CD14-positive monocyte (primary cell): ENCODE measurements at regions of chr2 and their contacts with region 1.

Region 1: GRCh38 chr2:239499726-239500573 is 99.1 kb upstream of the HDAC4 start:
- DNase-seq: peak; percentile 62 to 70 (median 66)
- H3K4me3 ChIP-seq: peak overlapping the region in 1 of 3 experiments; percentile 57
- H3K4me3 Mint-ChIP-seq: peak overlapping the region; percentile 66 to 81
- H3K27ac ChIP-seq: peak overlapping the region; percentile 97 to 100
- H3K27ac Mint-ChIP-seq: peak overlapping the region; percentile 97 to 100 (median 99)
- H3K4me1 ChIP-seq: peaks cover 59 to 66% of the 10 kb centered on the region in 2 donors
- H3K4me1 Mint-ChIP-seq: peaks cover 67% of the 10 kb centered on the region
- H3K27me3 ChIP-seq: no peaks in the 10 kb centered on the region
- H3K27me3 Mint-ChIP-seq: peaks cover 0 to 4% (median 2%) of the 10 kb centered on the region in 3 donors
- CTCF ChIP-seq: no peak

Region 2: DNA sequence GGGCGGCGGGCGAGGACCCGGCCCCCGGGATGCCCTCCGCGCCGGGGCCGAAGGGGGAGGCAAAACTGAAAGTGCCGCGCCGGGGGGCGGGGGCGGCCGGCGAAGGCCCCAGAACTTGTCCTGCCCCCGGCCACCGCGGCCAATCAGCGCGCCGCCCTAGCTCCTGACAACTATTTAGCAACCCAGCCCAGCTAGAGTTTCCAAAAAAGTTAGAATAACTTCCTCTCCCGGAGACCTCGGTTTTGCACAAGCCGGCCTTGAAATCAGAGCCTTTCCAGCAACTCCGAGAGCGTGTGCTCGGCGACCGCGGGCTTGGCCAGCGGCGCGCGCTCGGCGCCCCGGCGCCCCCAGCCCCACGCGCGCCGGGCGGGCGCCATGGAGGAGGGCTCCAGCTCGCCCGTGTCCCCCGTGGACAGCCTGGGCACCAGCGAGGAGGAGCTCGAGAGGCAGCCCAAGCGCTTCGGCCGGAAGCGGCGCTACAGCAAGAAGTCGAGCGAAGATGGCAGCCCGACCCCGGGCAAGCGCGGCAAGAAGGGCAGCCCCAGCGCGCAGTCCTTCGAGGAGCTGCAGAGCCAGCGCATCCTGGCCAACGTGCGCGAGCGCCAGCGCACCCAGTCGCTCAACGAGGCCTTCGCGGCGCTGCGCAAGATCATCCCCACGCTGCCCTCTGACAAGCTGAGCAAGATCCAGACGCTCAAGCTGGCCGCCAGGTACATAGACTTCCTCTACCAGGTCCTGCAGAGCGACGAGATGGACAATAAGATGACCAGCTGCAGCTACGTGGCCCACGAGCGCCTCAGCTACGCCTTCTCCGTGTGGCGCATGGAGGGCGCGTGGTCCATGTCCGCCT is 651.9 kb before region 1 on chr2 and contains the start of gene TWIST2:
- intact Hi-C with region 1: no loop called
- DNase-seq: peak in 2 of 3 donors; percentile 19 to 22
- H3K4me3 ChIP-seq: peak within 1 kb of the TSS; percentile 41 to 76 (median 41)
- H3K4me3 Mint-ChIP-seq: peak within 1 kb of the TSS; percentile 61 to 87
- H3K27ac ChIP-seq: no peak within 1 kb of the TSS
- H3K27ac Mint-ChIP-seq: no peak within 1 kb of the TSS
- H3K4me1 ChIP-seq: peaks cover 12 to 31% of the 10 kb centered on the region in 2 donors
- H3K4me1 Mint-ChIP-seq: peaks cover 11% of the 10 kb centered on the region
- H3K27me3 ChIP-seq: peaks cover 70 to 89% of the 10 kb centered on the region in 2 donors
- H3K27me3 Mint-ChIP-seq: peaks cover 74 to 91% (median 79%) of the 10 kb centered on the region in 3 donors
- CTCF ChIP-seq: no peak
- polyA plus RNA-seq, gene TWIST2: 0.43 to 0.49 (median 0.43) TPM

Region 3: GRCh38 chr2:239223310-239224198 is 276.4 kb before region 1 on chr2:
- intact Hi-C with region 1: loop called in 1 of 2 experiments (anchors 10 kb)
- DNase-seq: no peak
- H3K4me3 ChIP-seq: peak overlapping the region in 1 of 3 experiments; percentile 65
- H3K4me3 Mint-ChIP-seq: peak overlapping the region; percentile 74 to 82
- H3K27ac ChIP-seq: peak overlapping the region; percentile 92 to 100
- H3K27ac Mint-ChIP-seq: peak overlapping the region; percentile 97 to 100 (median 100)
- H3K4me1 ChIP-seq: peaks cover 90 to 91% of the 10 kb centered on the region in 2 donors
- H3K4me1 Mint-ChIP-seq: peaks cover 93% of the 10 kb centered on the region
- H3K27me3 ChIP-seq: no peaks in the 10 kb centered on the region
- H3K27me3 Mint-ChIP-seq: peaks cover 0 to 2% (median 0%) of the 10 kb centered on the region in 3 donors
- CTCF ChIP-seq: no peak

Region 4: GRCh38 chr2:239444626-239445625 is 55.0 kb before region 1 on chr2:
- intact Hi-C with region 1: no loop called
- DNase-seq: no peak
- H3K4me3 ChIP-seq: no peak overlapping the region
- H3K4me3 Mint-ChIP-seq: no peak overlapping the region
- H3K27ac ChIP-seq: no peak overlapping the region
- H3K27ac Mint-ChIP-seq: peak overlapping the region in 1 of 7 donors; percentile 1
- H3K4me1 ChIP-seq: peaks cover 32 to 39% of the 10 kb centered on the region in 2 donors
- H3K4me1 Mint-ChIP-seq: peaks cover 50% of the 10 kb centered on the region
- H3K27me3 ChIP-seq: peaks cover 2 to 12% of the 10 kb centered on the region in 2 donors
- H3K27me3 Mint-ChIP-seq: peaks cover 18 to 28% (median 27%) of the 10 kb centered on the region in 3 donors
- CTCF ChIP-seq: no peak

Region 5: GRCh38 chr2:239465017-239466001 is 34.6 kb before region 1 on chr2:
- intact Hi-C with region 1: loop called (anchors 2 to 5 kb)
- DNase-seq: peak; percentile 99
- H3K4me3 ChIP-seq: peak overlapping the region in 1 of 3 experiments; percentile 21
- H3K4me3 Mint-ChIP-seq: peak overlapping the region; percentile 41 to 77
- H3K27ac ChIP-seq: peak overlapping the region; percentile 87 to 97
- H3K27ac Mint-ChIP-seq: peak overlapping the region in 4 of 7 donors; percentile 97 to 99 (median 98)
- H3K4me1 ChIP-seq: peaks cover 38 to 39% of the 10 kb centered on the region in 2 donors
- H3K4me1 Mint-ChIP-seq: peaks cover 41% of the 10 kb centered on the region
- H3K27me3 ChIP-seq: no peaks in the 10 kb centered on the region
- H3K27me3 Mint-ChIP-seq: peaks cover 0 to 2% (median 2%) of the 10 kb centered on the region in 3 donors
- CTCF ChIP-seq: no peak

Region 6: DNA sequence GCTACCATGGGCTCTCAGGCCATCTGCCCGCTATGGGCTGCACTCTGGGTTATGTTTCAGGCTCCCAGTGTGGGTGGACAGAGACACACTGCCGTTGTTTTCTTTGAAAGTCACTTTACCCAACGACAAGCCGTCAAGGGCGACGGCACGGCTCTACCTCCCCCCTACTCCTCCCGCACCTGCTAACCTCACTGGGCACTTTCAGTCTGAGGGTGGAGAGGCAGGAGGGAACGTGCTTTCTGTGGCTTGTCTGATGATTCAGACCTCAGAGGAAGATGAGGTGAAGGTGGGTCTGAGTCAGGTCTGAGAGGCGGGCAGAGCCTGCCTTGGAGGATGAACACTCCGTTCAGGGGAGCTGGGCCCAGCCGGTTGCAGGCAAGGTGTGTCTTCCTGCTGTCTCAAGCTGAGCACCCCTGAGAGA is 48.5 kb after region 1 on chr2:
- intact Hi-C with region 1: no loop called
- DNase-seq: no peak
- H3K4me3 ChIP-seq: no peak overlapping the region
- H3K4me3 Mint-ChIP-seq: no peak overlapping the region
- H3K27ac ChIP-seq: no peak overlapping the region
- H3K27ac Mint-ChIP-seq: no peak overlapping the region
- H3K4me1 ChIP-seq: no peaks in the 10 kb centered on the region
- H3K4me1 Mint-ChIP-seq: peaks cover 2% of the 10 kb centered on the region
- H3K27me3 ChIP-seq: no peaks in the 10 kb centered on the region
- H3K27me3 Mint-ChIP-seq: peaks cover 13 to 33% (median 22%) of the 10 kb centered on the region in 3 donors
- CTCF ChIP-seq: no peak

Region 7: DNA sequence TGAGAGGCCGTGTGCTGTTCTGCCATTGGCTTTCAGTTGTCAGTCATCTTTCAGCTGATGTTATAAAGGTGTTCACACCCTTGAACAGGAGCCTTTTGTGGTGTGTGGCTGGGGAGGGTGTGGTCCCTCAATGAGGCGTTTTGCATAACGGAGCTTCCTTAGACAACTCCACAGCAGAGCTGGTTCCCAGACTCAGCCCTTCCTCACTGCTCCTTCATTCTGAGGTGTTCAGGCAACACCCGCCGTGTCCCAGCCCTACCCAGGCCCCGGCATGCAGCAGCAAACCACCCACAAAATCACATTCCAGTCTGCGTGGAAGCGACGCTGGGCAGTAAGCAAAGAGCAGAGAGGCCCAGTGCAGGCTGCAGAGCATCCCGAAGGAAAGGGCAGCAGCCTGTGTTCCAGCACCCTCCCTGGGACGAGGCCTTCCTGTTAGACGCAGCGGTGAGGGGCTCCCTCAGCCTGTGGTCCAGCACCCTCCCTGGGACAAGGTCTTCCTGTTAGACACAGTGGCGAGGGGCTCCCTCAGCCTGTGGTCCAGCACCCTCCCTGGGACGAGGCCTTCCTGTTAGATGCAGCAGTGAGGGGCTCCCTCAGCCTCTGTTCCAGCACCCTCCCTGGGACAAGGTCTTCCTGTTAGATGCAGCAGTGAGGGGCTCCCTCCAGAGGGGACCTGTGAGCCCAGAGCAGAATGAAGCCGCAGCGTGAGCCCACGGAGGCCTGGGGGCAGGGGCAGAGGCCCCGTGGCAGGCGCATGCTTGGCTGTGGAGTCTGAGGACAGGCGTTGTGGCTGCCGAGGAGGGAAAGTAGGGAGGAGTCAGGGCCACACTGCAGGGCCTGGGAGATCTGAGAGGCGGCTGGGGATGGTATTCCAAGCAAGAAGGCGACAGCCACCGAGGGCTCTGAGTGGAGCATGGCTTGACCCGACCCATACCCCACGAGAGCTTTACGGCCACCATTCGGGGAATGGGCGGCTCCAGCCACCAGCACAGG is 102.6 kb after region 1 on chr2:
- intact Hi-C with region 1: loop called (anchors 2 to 10 kb)
- DNase-seq: peak; percentile 23 to 39 (median 38)
- H3K4me3 ChIP-seq: peak overlapping the region in 1 of 3 experiments; percentile 18
- H3K4me3 Mint-ChIP-seq: peak overlapping the region; percentile 45 to 51
- H3K27ac ChIP-seq: peak overlapping the region; percentile 9 to 59
- H3K27ac Mint-ChIP-seq: peak overlapping the region in 6 of 7 donors; percentile 63 to 90 (median 81)
- H3K4me1 ChIP-seq: peaks cover 56 to 71% of the 10 kb centered on the region in 2 donors
- H3K4me1 Mint-ChIP-seq: peaks cover 67% of the 10 kb centered on the region
- H3K27me3 ChIP-seq: no peaks in the 10 kb centered on the region
- H3K27me3 Mint-ChIP-seq: peaks cover 0 to 6% (median 0%) of the 10 kb centered on the region in 3 donors
- CTCF ChIP-seq: no peak

Region 8: GRCh38 chr2:239607517-239608191 is 107.7 kb after region 1 on chr2:
- intact Hi-C with region 1: loop called (anchors 2 to 10 kb)
- DNase-seq: no peak
- H3K4me3 ChIP-seq: peak overlapping the region in 1 of 3 experiments; percentile 30
- H3K4me3 Mint-ChIP-seq: peak overlapping the region in 1 of 2 donors; percentile 73
- H3K27ac ChIP-seq: peak overlapping the region; percentile 50 to 88
- H3K27ac Mint-ChIP-seq: peak overlapping the region; percentile 51 to 92 (median 83)
- H3K4me1 ChIP-seq: peaks cover 52 to 64% of the 10 kb centered on the region in 2 donors
- H3K4me1 Mint-ChIP-seq: peaks cover 53% of the 10 kb centered on the region
- H3K27me3 ChIP-seq: no peaks in the 10 kb centered on the region
- H3K27me3 Mint-ChIP-seq: peaks cover 0 to 3% (median 1%) of the 10 kb centered on the region in 3 donors
- CTCF ChIP-seq: no peak

Region 9: GRCh38 chr2:239677453-239678185 is 177.7 kb after region 1 on chr2:
- intact Hi-C with region 1: no loop called
- DNase-seq: no peak
- H3K4me3 ChIP-seq: no peak overlapping the region
- H3K4me3 Mint-ChIP-seq: peak overlapping the region in 1 of 2 donors; percentile 58
- H3K27ac ChIP-seq: no peak overlapping the region
- H3K27ac Mint-ChIP-seq: peak overlapping the region in 1 of 7 donors; percentile 33
- H3K4me1 ChIP-seq: no peaks in the 10 kb centered on the region
- H3K4me1 Mint-ChIP-seq: peaks cover 3% of the 10 kb centered on the region
- H3K27me3 ChIP-seq: peaks cover 6 to 19% of the 10 kb centered on the region in 2 donors
- H3K27me3 Mint-ChIP-seq: peaks cover 9 to 21% (median 20%) of the 10 kb centered on the region in 3 donors
- CTCF ChIP-seq: no peak